Naive thymus-derived CD4-positive, alpha-beta T cell (primary cell): ENCODE measurements at regions of chr10 and their contacts with region 1.

Region 1: GRCh38 chr10:80509403-80510161 is 28.1 kb upstream of the SH2D4B start:
- DNase-seq: no peak
- ATAC-seq: no peak
- H3K4me3 ChIP-seq: no peak overlapping the region
- H3K4me3 Mint-ChIP-seq: peak overlapping the region in 2 of 10 donors; percentile 6 to 36
- H3K27ac ChIP-seq: peak overlapping the region; percentile 9
- H3K27ac Mint-ChIP-seq: peak overlapping the region in 8 of 9 donors; percentile 44 to 94 (median 88)
- H3K4me1 ChIP-seq: peaks cover 15 to 31% of the 10 kb centered on the region in 2 donors
- H3K4me1 Mint-ChIP-seq: peaks cover 30 to 64% (median 50%) of the 10 kb centered on the region in 7 donors
- H3K27me3 ChIP-seq: no peaks in the 10 kb centered on the region
- H3K27me3 Mint-ChIP-seq: no peaks in the 10 kb centered on the region

Region 2: DNA sequence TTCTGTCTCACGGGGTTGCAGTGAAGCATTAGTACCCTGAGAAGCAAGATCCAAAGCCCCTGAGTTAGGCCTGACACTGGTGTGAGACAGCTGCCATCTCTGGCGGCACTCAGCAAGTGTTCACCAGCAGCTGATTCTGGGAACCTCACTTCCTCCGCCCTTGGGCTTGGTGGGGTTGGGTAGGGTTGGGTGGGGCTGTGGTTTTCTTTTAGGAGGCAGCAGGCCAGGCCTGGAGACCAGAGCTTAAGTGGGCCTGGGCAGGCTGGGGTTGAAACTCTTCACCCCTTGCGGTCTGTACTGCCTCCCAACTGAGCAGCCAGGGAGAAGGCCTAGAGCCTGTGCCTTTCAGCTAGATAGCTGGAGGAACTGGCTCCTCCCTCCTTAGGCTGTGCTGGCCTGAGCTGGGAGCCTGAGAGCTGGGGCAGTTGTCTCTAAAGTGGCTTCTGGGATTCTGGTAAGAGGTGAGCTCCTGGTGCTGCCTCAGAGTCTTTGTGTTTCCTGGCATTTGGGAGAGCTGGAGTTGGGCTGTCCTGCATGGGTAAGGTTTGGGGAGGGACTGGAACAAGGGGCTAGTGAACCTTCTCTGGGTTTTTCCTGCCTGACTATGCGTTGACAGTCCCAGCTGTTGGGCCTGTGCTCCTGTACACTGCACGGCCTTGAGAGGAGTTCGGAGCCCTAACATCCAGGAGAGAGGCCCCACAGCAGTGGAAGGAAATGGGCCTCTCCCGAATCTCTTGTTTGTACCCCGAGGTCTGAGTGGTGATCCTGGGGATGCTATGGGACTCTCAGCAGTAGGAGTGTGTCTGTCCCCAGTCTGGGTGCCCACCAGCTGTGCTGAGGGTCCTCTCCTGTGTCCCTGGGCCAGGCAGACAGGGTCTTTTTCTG is 50.3 kb before region 1 on chr10:
- CTCF ChIA-PET with region 1: interaction called, 839 read pairs
- POLR2A ChIA-PET with region 1: interaction called, 582 read pairs
- intact Hi-C with region 1: loop called (anchors 2 kb)
- DNase-seq: peak in 7 of 9 donors; percentile 53 to 66 (median 55)
- ATAC-seq: peak; percentile 66
- H3K4me3 ChIP-seq: peak overlapping the region; percentile 87
- H3K4me3 Mint-ChIP-seq: peak overlapping the region; percentile 79 to 99 (median 98)
- H3K27ac ChIP-seq: peak overlapping the region; percentile 84
- H3K27ac Mint-ChIP-seq: peak overlapping the region; percentile 87 to 99 (median 98)
- H3K4me1 ChIP-seq: peaks cover 75 to 79% of the 10 kb centered on the region in 2 donors
- H3K4me1 Mint-ChIP-seq: peaks cover 77 to 85% (median 83%) of the 10 kb centered on the region in 7 donors
- H3K27me3 ChIP-seq: no peaks in the 10 kb centered on the region
- H3K27me3 Mint-ChIP-seq: no peaks in the 10 kb centered on the region

Region 3: GRCh38 chr10:80464557-80465450 is 44.8 kb before region 1 on chr10:
- CTCF ChIA-PET with region 1: interaction called, 839 read pairs
- POLR2A ChIA-PET with region 1: interaction called, 582 read pairs
- intact Hi-C with region 1: loop called in 1 of 2 experiments (anchors 1 kb)
- DNase-seq: peak in 2 of 9 donors; percentile 46 to 47
- ATAC-seq: peak; percentile 11
- H3K4me3 ChIP-seq: peak overlapping the region; percentile 57
- H3K4me3 Mint-ChIP-seq: peak overlapping the region; percentile 79 to 99 (median 88)
- H3K27ac ChIP-seq: peak overlapping the region; percentile 84
- H3K27ac Mint-ChIP-seq: peak overlapping the region; percentile 87 to 99 (median 98)
- H3K4me1 ChIP-seq: peaks cover 88 to 97% of the 10 kb centered on the region in 2 donors
- H3K4me1 Mint-ChIP-seq: peaks cover 75 to 100% (median 95%) of the 10 kb centered on the region in 7 donors
- H3K27me3 ChIP-seq: no peaks in the 10 kb centered on the region
- H3K27me3 Mint-ChIP-seq: no peaks in the 10 kb centered on the region

Region 4: GRCh38 chr10:80530251-80530650 is 20.7 kb after region 1 on chr10:
- CTCF ChIA-PET with region 1: interaction called, 22 read pairs
- POLR2A ChIA-PET with region 1: interaction called, 6 read pairs
- intact Hi-C with region 1: loop called (anchors 1 kb)
- DNase-seq: peak in 6 of 9 donors; percentile 38 to 56 (median 46)
- ATAC-seq: peak; percentile 77
- H3K4me3 ChIP-seq: no peak overlapping the region
- H3K4me3 Mint-ChIP-seq: peak overlapping the region; percentile 56 to 85 (median 73)
- H3K27ac ChIP-seq: peak overlapping the region; percentile 60
- H3K27ac Mint-ChIP-seq: peak overlapping the region; percentile 88 to 97 (median 92)
- H3K4me1 ChIP-seq: peaks cover 39 to 74% of the 10 kb centered on the region in 2 donors
- H3K4me1 Mint-ChIP-seq: peaks cover 55 to 77% (median 73%) of the 10 kb centered on the region in 7 donors
- H3K27me3 ChIP-seq: no peaks in the 10 kb centered on the region
- H3K27me3 Mint-ChIP-seq: no peaks in the 10 kb centered on the region

Region 5: DNA sequence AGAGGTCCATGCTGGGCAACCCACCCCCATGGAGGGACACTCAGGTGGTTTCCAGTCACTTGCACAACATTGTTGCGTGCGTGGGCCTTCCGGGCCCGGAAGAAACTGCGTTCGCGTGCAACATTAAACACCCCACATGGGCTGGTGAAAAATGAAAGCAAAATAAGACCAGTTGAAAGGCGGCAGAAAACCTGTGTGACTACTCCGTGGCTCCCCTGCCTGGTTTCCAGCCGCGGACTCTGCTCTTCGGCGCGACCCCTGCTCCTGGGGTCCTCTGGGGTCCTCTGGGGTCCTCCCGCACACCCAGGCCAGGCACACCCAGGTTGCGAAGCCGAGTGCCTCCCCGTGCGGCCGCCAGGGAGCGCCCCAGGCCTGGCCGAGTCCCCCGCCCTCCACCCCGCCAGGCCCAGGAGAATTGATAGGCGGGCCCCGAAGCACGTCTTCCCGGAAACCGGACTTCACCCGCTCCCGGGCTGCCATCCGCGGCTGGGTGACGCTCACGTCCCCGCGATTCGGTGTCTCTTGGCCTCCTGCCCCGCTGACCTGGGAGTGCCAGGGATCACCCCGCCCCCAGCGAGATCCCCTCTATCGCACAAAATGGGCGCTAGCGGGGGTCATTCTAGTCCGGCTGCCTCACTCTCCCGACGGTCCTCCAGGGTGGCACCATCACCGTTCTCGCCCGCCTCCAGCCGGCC is 26.2 kb after region 1 on chr10:
- CTCF ChIA-PET with region 1: interaction called, 22 read pairs
- POLR2A ChIA-PET with region 1: interaction called, 3 read pairs
- intact Hi-C with region 1: loop called (anchors 1 to 2 kb)
- DNase-seq: peak; percentile 64 to 82 (median 78)
- ATAC-seq: peak; percentile 92
- H3K4me3 ChIP-seq: peak overlapping the region; percentile 59
- H3K4me3 Mint-ChIP-seq: peak overlapping the region; percentile 84 to 99 (median 93)
- H3K27ac ChIP-seq: peak overlapping the region; percentile 82
- H3K27ac Mint-ChIP-seq: peak overlapping the region; percentile 97 to 100 (median 99)
- H3K4me1 ChIP-seq: peaks cover 13 to 28% of the 10 kb centered on the region in 2 donors
- H3K4me1 Mint-ChIP-seq: peaks cover 17 to 42% (median 40%) of the 10 kb centered on the region in 7 donors
- H3K27me3 ChIP-seq: no peaks in the 10 kb centered on the region
- H3K27me3 Mint-ChIP-seq: no peaks in the 10 kb centered on the region

Region 6: DNA sequence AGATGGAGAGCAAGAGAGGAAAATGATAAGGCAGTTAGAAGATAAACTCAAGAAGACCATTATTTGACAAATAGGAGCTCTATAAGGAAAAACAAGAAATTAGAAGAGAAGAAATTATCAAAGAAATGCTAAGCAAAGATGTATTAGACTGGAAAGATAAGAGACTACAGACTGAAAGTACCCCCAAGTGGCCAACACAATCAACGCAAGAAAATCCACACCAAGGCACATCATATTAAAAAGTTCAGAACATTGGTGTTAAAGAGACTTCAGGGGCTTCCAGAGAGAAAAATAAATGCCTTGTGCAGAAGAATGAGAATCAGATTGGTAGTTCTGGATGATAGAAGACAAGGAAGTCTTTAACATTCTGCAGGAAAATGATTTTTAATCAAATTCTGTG is 74.1 kb after region 1 on chr10:
- CTCF ChIA-PET with region 1: interaction called, 3 read pairs
- POLR2A ChIA-PET with region 1: no interaction called
- intact Hi-C with region 1: loop called in 1 of 2 experiments (anchors 1 kb)
- DNase-seq: peak in 1 of 9 donors; percentile 23
- ATAC-seq: no peak
- H3K4me3 ChIP-seq: no peak overlapping the region
- H3K4me3 Mint-ChIP-seq: no peak overlapping the region
- H3K27ac ChIP-seq: no peak overlapping the region
- H3K27ac Mint-ChIP-seq: no peak overlapping the region
- H3K4me1 ChIP-seq: no peaks in the 10 kb centered on the region
- H3K4me1 Mint-ChIP-seq: peaks cover 0 to 10% (median 3%) of the 10 kb centered on the region in 7 donors
- H3K27me3 ChIP-seq: no peaks in the 10 kb centered on the region
- H3K27me3 Mint-ChIP-seq: peaks cover 0 to 13% (median 0%) of the 10 kb centered on the region in 5 donors